CD14-positive monocyte (primary cell): ENCODE measurements at regions of chr5 and their contacts with region 1.

Region 1: GRCh38 chr5:131277875-131278740 is 14.3 kb downstream of the CDC42SE2 start:
- DNase-seq: no peak
- H3K4me3 ChIP-seq: no peak overlapping the region
- H3K4me3 Mint-ChIP-seq: no peak overlapping the region
- H3K27ac ChIP-seq: peak overlapping the region; percentile 4 to 57
- H3K27ac Mint-ChIP-seq: peak overlapping the region; percentile 57 to 87 (median 69)
- H3K4me1 ChIP-seq: peaks cover 22 to 46% of the 10 kb centered on the region in 2 donors
- H3K4me1 Mint-ChIP-seq: peaks cover 56% of the 10 kb centered on the region
- H3K27me3 ChIP-seq: no peaks in the 10 kb centered on the region
- H3K27me3 Mint-ChIP-seq: peaks cover 0 to 4% (median 0%) of the 10 kb centered on the region in 3 donors
- CTCF ChIP-seq: no peak

Region 2: DNA sequence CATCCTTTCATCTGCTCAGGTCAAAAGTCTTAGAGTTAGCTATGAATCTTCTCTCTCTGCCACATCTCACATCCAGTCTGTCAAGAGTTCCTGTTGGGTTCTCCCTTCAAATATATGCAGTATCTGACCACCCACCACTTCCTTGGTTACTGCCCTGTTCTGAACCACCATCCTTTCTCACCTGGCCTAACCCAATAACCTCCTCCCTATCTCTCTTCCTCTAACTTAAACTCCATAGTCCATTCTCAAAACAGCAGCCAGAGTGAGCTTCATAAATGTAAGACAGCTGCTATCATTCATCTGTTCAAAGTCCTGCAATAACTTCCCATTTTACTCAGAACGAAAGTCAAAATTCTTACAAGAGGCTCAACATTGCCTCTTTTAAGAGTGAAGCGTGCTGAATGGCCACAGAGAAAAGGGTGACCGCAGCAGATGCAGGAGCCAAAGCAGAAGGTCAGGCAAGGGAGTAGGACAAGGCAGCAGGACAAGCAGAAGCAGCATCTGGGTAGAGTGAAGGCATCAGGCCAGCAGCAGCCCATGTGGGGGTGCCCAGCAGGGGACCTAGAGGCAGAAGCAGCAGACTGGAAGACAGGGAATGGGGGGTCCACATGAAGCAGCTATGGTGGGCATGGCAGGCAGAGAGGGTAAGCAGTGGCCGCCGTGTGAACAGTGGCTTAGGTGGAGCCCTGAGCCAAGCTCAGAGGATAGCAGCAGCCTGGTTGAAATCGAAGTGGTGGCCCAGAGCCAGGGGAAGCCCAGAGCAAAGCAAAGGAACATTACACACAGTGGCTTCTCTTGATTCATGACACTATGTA is 53.5 kb before region 1 on chr5:
- intact Hi-C with region 1: loop called in 1 of 2 experiments (anchors 10 kb)
- DNase-seq: peak; percentile 71 to 82 (median 79)
- H3K4me3 ChIP-seq: peak overlapping the region in 1 of 3 experiments; percentile 16
- H3K4me3 Mint-ChIP-seq: no peak overlapping the region
- H3K27ac ChIP-seq: peak overlapping the region; percentile 79 to 81
- H3K27ac Mint-ChIP-seq: no peak overlapping the region
- H3K4me1 ChIP-seq: peaks cover 47 to 50% of the 10 kb centered on the region in 2 donors
- H3K4me1 Mint-ChIP-seq: peaks cover 5% of the 10 kb centered on the region
- H3K27me3 ChIP-seq: no peaks in the 10 kb centered on the region
- H3K27me3 Mint-ChIP-seq: peaks cover 0 to 1% (median 0%) of the 10 kb centered on the region in 3 donors
- CTCF ChIP-seq: no peak

Region 3: GRCh38 chr5:131406975-131407638 is 129.0 kb after region 1 on chr5:
- intact Hi-C with region 1: no loop called
- DNase-seq: peak in 1 of 3 donors; percentile 7
- H3K4me3 ChIP-seq: no peak overlapping the region
- H3K4me3 Mint-ChIP-seq: no peak overlapping the region
- H3K27ac ChIP-seq: no peak overlapping the region
- H3K27ac Mint-ChIP-seq: peak overlapping the region in 2 of 7 donors; percentile 11 to 59
- H3K4me1 ChIP-seq: no peaks in the 10 kb centered on the region
- H3K4me1 Mint-ChIP-seq: no peaks in the 10 kb centered on the region
- H3K27me3 ChIP-seq: no peaks in the 10 kb centered on the region
- H3K27me3 Mint-ChIP-seq: peaks cover 0 to 1% (median 0%) of the 10 kb centered on the region in 3 donors
- CTCF ChIP-seq: no peak